ENCODE measurements at regions of chr20 and their contacts with region 1.

Region 1: DNA sequence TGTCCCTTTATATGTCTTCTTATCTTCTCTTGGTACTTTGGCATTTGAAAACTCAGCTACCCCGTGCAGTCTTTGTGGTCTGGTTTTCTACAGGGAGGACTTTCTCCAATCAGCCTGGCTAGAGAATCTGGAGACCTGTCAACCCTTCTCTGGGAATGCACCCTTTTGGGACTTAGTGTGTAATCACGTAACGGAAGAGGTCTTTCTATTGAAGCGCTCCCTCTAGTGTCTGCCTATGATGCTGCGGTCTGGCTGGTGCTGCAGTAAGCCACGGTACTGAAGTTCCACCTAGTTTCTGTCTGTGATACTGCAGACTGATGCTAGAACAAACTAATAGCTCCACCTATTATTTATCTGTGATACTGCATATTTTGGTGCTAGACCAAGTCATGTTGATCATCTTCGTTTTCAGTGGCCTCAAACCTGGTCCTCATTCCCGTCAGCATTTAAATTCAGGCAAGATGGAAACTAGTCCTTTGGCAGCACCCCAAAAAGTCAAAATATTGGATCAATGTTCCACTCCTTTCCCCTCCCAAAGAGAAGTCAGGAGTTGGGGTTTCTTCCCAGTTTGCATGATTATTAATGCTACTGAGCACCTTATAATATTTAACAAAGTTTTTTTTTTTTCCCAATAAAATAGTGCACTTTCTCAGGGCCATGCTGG is 12.5 kb upstream of the SIRPB2 start:
- DNase-seq: peak; percentile 41 to 76
- ATAC-seq: peak; percentile 69 to 96 (median 93)
- H3K4me3 ChIP-seq: no peak overlapping the region
- H3K27ac ChIP-seq: no peak overlapping the region
- H3K4me1 ChIP-seq: peaks cover 0 to 6% (median 0%) of the 10 kb centered on the region in 9 donors
- H3K27me3 ChIP-seq: peaks cover 0 to 16% (median 10%) of the 10 kb centered on the region in 7 donors
- CTCF ChIP-seq: peak; percentile 53 to 97 (median 78)

Region 2: DNA sequence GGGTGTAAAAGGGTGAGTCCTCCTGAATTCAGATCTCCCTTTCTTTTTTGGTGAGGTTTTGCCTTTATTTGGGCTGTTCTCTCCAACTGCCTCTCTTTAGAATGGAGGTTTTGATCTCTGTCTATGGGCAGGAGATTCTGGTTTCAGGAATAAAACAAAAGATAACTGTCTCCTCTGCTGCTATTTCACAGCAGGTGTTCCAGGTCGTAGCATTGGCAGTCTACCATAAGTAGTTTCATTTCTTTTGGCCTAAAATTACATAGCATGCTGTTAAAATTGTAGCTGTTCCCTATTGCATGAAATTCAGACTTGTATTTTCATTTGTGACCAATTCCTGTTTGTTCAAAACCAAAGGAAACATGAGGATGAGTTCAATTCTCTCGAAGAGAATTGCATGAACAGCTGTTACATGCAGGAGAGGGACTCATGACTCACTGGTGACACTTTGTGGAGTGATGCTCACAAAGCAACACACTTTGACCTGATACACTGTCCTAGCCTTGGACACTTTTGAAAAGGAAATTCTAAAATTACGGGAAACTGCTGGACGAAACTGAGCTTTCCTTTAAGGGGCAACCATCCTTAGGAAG is 230.7 kb after region 1 on chr20:
- intact Hi-C with region 1: loop called in 1 of 10 experiments (anchors 10 kb)
- DNase-seq: no peak
- ATAC-seq: no peak
- H3K4me3 ChIP-seq: no peak overlapping the region
- H3K27ac ChIP-seq: no peak overlapping the region
- H3K4me1 ChIP-seq: peaks cover 0 to 5% (median 0%) of the 10 kb centered on the region in 9 donors
- H3K27me3 ChIP-seq: peaks cover 0 to 39% (median 13%) of the 10 kb centered on the region in 7 donors
- CTCF ChIP-seq: peak in 6 of 9 donors; percentile 15 to 50 (median 24)

Measured in heart right ventricle (tissue), 16 donors.